Activated CD8-positive, alpha-beta T cell treated with anti-CD3 and anti-CD28 coated beads, Interleukin-2, amount 10 ng/mL, durations not matched to agents 7 days and 5 days (primary cell): ENCODE measurements at regions of chr17 and their contacts with region 1.

Region 1: GRCh38 chr17:21511363-21512198 is 135.4 kb downstream of the KCNJ12 start:
- DNase-seq: peak; percentile 73
- ATAC-seq: peak; percentile 84
- H3K4me3 Mint-ChIP-seq: peak overlapping the region; percentile 61
- H3K27ac Mint-ChIP-seq: no peak overlapping the region
- H3K4me1 Mint-ChIP-seq: peaks cover 24% of the 10 kb centered on the region
- H3K27me3 Mint-ChIP-seq: peaks cover 45% of the 10 kb centered on the region

Region 2: GRCh38 chr17:21119247-21119918 is 392.2 kb before region 1 on chr17:
- CTCF ChIA-PET with region 1: interaction called, 23 read pairs
- POLR2A ChIA-PET with region 1: no interaction called
- DNase-seq: peak; percentile 81
- ATAC-seq: peak; percentile 84
- H3K4me3 Mint-ChIP-seq: no peak overlapping the region
- H3K27ac Mint-ChIP-seq: no peak overlapping the region
- H3K4me1 Mint-ChIP-seq: peaks cover 11% of the 10 kb centered on the region
- H3K27me3 Mint-ChIP-seq: peaks cover 8% of the 10 kb centered on the region

Region 3: DNA sequence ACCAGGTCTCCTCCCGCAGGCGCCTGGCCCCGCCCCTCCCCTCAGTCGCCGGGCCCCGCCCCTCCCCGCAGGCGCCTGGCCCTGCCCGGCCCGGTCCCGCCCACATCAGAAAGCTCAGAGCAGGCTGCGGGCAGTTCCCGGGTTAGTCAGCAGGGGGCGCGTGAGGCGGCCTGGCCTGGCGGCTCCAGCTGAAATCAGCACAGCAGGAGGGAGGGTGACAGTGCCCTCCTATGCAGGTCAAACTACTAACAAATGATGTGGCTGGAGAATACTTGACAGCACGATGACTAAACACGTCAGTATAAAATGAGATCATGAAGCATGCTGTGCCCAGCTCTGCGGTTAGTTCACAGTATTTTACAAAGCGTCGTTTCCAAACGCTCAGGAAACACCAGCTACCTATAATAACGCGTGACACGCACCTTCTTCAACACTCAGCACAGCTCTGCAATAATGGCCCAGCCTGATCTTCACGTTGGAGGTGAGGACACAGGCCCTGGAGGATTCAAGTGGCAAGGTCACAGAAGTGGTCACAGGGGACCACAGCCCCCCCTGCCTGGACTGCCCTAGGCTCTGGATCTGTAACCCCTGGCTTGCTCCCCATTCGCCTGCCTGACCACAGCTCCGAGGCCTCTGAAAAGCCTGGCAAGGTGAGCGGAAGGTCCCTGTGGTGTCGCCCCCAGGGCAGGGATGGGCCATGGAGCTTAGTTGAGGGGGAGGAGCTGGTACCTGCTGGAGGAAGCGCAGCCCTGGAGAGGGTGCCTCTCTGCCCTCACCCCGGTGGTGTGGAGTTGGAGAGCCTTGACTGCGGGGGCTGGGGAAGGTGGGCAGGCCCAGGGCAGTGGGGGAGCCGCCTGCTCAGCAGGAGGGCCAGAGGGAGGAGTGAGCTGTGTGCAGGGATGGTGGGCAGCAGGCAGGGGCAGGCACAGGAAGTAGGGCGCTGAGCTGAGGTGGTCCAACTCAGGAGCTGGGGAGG is 54.2 kb before region 1 on chr17:
- CTCF ChIA-PET with region 1: interaction called, 79 read pairs
- POLR2A ChIA-PET with region 1: interaction called, 5 read pairs
- DNase-seq: peak; percentile 92
- ATAC-seq: peak; percentile 90
- H3K4me3 Mint-ChIP-seq: peak overlapping the region; percentile 34
- H3K27ac Mint-ChIP-seq: peak overlapping the region; percentile 57
- H3K4me1 Mint-ChIP-seq: peaks cover 29% of the 10 kb centered on the region
- H3K27me3 Mint-ChIP-seq: peaks cover 14% of the 10 kb centered on the region